PC-3 (cell line): ENCODE measurements at regions of chr5 and their contacts with region 1.

Region 1: DNA sequence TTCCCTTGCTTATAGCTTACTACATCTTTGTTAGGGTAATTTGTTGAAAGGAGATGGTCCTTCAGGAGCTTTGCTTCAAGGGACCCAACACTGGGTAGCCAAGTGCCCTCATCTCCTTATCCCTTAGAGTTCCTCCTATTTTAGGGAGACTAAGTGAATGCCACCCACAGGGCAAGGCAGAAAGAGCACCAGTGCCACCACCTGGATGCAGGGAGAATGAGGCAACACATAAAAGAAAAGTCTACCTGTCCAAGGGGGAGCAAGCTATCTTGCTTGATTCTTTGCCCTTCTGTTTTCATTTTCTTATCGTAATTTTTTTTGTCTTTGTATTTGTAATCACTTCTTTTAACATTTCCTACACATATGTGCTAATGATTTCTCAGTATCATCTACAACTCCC is 205.5 kb downstream of the NPR3 start:
- DNase-seq: peak; percentile 80
- ATAC-seq: peak; percentile 92
- H3K4me3 ChIP-seq: no peak overlapping the region
- H3K27ac ChIP-seq: no peak overlapping the region
- H3K4me1 ChIP-seq: no peaks in the 10 kb centered on the region
- H3K27me3 ChIP-seq: no peaks in the 10 kb centered on the region
- CTCF ChIP-seq: peak; percentile 95

Region 2: DNA sequence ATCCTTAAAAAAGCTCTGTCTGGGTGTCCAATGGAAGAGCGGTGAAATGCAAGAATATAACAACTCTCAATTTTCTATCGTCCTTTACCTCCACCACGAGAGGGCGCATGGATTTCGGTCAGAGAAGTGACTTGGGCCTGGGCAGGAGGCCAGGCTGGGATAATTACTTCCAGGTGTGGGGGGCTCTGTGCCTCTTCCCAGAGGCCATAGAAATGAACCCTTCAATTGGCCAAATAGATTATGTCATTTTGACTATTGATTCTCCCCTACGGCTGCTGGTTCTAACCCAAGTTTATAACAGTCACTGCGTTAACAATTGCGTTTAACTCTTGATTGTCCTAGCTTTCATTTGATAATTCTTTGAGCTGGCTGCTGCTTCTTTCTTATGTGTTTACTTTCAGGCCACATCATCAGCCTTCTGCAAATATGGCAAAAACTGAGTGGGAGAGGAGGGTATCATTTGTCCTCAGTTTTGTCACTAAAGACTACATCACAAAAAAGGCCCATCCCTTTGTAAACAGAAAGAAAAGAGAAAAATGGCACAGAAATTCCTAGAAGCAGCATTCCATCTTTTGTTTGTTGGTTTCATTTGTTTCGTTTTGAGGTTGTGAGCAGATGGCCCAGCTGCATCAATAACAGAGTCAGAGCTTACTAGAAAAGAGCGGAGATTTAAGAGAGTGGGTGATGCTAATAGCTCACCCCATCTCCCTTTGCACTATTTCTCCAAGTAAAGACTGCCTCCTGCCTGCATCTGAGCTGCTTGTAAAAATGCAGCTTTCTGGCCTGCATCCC is 426.7 kb before region 1 on chr5:
- CTCF ChIA-PET with region 1: no interaction called
- POLR2A ChIA-PET with region 1: no interaction called
- intact Hi-C with region 1: loop called (anchors 5 kb)
- DNase-seq: peak; percentile 86
- ATAC-seq: peak; percentile 88
- H3K4me3 ChIP-seq: peak overlapping the region; percentile 9; the same call in 1 of the 2 replicates
- H3K27ac ChIP-seq: peak overlapping the region; percentile 53
- H3K4me1 ChIP-seq: peaks cover 14% of the 10 kb centered on the region
- H3K27me3 ChIP-seq: no peaks in the 10 kb centered on the region
- CTCF ChIP-seq: peak; percentile 91

Region 3: DNA sequence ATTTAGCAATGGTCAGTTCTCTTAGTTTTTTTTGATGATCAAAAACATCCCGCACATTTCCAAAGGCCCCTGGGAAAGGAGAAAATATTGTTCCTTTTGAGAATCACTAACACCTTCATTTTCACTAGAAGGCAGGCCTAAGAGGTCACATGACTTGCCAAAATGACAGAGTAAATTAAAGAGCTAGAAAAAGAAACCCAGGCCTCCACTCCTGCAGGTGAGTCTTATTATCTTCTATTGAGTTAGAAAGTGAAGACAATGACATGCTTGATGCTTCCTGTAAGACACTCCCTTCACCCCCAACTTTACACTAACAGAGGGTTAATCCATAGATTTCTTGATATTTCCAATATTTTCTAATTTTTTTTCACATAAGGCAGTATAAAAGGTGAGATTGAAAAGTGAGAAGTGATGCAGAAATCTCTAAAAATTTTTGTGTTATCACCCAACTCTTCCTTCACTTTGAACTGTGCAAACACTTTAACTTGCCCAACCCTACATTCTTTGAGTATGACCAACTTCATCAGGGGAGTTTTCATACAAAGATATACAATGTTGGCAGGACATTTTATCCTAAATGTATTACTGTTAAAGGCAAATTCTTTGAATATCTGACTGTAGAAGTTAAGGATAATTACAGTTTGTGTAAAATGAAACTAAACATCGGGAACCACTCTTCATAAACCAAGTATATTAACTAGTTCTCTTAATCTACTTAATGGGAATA is 274.2 kb before region 1 on chr5:
- CTCF ChIA-PET with region 1: no interaction called
- POLR2A ChIA-PET with region 1: no interaction called
- intact Hi-C with region 1: no loop called
- DNase-seq: peak; percentile 79
- ATAC-seq: peak; percentile 93
- H3K4me3 ChIP-seq: peak overlapping the region; percentile 49
- H3K27ac ChIP-seq: 0 out of 2 replicates have a peak overlapping the region, but pooled peaks have one; percentile 3
- H3K4me1 ChIP-seq: peaks cover 22% of the 10 kb centered on the region
- H3K27me3 ChIP-seq: no peaks in the 10 kb centered on the region
- CTCF ChIP-seq: no peak

Region 4: DNA sequence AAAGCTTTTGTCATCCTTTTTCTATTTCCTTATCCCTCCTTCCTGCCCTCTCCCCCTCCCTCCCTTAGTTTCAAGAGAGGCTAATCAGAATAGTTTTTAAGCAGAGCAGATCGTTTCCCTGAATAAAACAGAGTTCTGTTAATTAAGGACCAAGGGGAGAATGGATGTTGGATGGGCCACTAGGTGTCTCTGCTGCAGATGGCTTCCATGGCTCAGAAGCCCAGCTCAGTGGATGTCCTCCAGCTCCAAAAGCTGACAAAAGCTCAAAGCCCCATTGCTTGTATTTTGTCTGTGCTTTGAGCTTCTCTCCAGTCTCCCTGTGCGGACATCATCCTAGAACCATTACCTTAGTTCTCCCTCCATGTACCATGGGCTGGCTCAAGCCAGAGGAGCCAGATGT is 226.5 kb before region 1 on chr5:
- CTCF ChIA-PET with region 1: no interaction called
- POLR2A ChIA-PET with region 1: no interaction called
- intact Hi-C with region 1: loop called (anchors 5 kb)
- DNase-seq: peak; percentile 41
- ATAC-seq: peak; percentile 59
- H3K4me3 ChIP-seq: no peak overlapping the region
- H3K27ac ChIP-seq: no peak overlapping the region
- H3K4me1 ChIP-seq: no peaks in the 10 kb centered on the region
- H3K27me3 ChIP-seq: no peaks in the 10 kb centered on the region
- CTCF ChIP-seq: peak; percentile 60

Region 5: DNA sequence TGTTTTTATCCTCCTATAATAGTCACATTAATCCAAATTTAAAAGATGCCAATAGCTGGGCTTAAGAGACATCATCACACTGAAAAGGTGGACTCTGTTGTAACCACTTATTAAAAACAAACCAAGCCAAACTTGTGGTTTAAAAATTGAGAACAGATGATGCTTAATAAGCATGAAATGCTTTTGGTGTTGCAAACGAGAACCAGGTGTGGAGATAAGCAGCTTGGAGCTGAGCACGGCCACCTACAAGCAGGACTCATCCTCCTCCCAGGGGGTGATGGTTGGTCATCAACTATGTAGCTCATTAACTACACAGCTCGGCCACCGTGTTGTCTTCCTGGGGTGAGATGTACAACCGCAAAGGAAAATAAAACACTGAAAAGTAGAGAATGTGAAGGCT is 51.2 kb before region 1 on chr5:
- CTCF ChIA-PET with region 1: no interaction called
- POLR2A ChIA-PET with region 1: no interaction called
- intact Hi-C with region 1: loop called (anchors 1 kb)
- DNase-seq: no peak
- ATAC-seq: no peak
- H3K4me3 ChIP-seq: no peak overlapping the region
- H3K27ac ChIP-seq: no peak overlapping the region
- H3K4me1 ChIP-seq: peaks cover 44% of the 10 kb centered on the region
- H3K27me3 ChIP-seq: no peaks in the 10 kb centered on the region
- CTCF ChIP-seq: no peak

Region 6: GRCh38 chr5:33299621-33300208 is 383.1 kb after region 1 on chr5:
- CTCF ChIA-PET with region 1: interaction called, 3 read pairs
- POLR2A ChIA-PET with region 1: no interaction called
- intact Hi-C with region 1: loop called (anchors 2 kb)
- DNase-seq: peak; percentile 72
- ATAC-seq: peak; percentile 82
- H3K4me3 ChIP-seq: peak overlapping the region; percentile 21; the same call in 1 of the 2 replicates
- H3K27ac ChIP-seq: peak overlapping the region; percentile 47
- H3K4me1 ChIP-seq: peaks cover 21% of the 10 kb centered on the region
- H3K27me3 ChIP-seq: no peaks in the 10 kb centered on the region
- CTCF ChIP-seq: peak; percentile 86